CD8-positive, alpha-beta T cell (primary cell): ENCODE measurements at regions of chr12 and their contacts with region 1.

Region 1: GRCh38 chr12:12376646-12377448 is 20.0 kb downstream of the BORCS5 start:
- DNase-seq: peak in 3 of 9 experiments; percentile 37 to 87 (median 76)
- ATAC-seq: peak; percentile 39
- H3K4me3 ChIP-seq: no peak overlapping the region
- H3K4me3 Mint-ChIP-seq: no peak overlapping the region
- H3K27ac ChIP-seq: no peak overlapping the region
- H3K27ac Mint-ChIP-seq: peak overlapping the region; percentile 60
- H3K4me1 ChIP-seq: peaks cover 21% of the 10 kb centered on the region
- H3K4me1 Mint-ChIP-seq: peaks cover 37% of the 10 kb centered on the region
- H3K27me3 ChIP-seq: no peaks in the 10 kb centered on the region
- H3K27me3 Mint-ChIP-seq: no peaks in the 10 kb centered on the region
- CTCF ChIP-seq: peak; percentile 79

Region 2: GRCh38 chr12:12266873-12267741 is 109.7 kb before region 1 on chr12 and contains the start of gene LRP6:
- CTCF ChIA-PET with region 1: no interaction called
- POLR2A ChIA-PET with region 1: no interaction called
- intact Hi-C with region 1: no loop called
- DNase-seq: peak; percentile 33 to 83 (median 69)
- ATAC-seq: peak; percentile 91
- H3K4me3 ChIP-seq: peak within 1 kb of the TSS; percentile 66 to 85
- H3K4me3 Mint-ChIP-seq: peak within 1 kb of the TSS; percentile 87
- H3K27ac ChIP-seq: peak within 1 kb of the TSS in 1 of 2 experiments; percentile 35
- H3K27ac Mint-ChIP-seq: no peak within 1 kb of the TSS
- H3K4me1 ChIP-seq: peaks cover 14% of the 10 kb centered on the region
- H3K4me1 Mint-ChIP-seq: peaks cover 23% of the 10 kb centered on the region
- H3K27me3 ChIP-seq: peaks cover 0 to 20% of the 10 kb centered on the region in 2 experiments
- H3K27me3 Mint-ChIP-seq: peaks cover 28% of the 10 kb centered on the region
- CTCF ChIP-seq: no peak
- total RNA-seq, gene LRP6: 1.3 to 2.1 TPM

Region 3: DNA sequence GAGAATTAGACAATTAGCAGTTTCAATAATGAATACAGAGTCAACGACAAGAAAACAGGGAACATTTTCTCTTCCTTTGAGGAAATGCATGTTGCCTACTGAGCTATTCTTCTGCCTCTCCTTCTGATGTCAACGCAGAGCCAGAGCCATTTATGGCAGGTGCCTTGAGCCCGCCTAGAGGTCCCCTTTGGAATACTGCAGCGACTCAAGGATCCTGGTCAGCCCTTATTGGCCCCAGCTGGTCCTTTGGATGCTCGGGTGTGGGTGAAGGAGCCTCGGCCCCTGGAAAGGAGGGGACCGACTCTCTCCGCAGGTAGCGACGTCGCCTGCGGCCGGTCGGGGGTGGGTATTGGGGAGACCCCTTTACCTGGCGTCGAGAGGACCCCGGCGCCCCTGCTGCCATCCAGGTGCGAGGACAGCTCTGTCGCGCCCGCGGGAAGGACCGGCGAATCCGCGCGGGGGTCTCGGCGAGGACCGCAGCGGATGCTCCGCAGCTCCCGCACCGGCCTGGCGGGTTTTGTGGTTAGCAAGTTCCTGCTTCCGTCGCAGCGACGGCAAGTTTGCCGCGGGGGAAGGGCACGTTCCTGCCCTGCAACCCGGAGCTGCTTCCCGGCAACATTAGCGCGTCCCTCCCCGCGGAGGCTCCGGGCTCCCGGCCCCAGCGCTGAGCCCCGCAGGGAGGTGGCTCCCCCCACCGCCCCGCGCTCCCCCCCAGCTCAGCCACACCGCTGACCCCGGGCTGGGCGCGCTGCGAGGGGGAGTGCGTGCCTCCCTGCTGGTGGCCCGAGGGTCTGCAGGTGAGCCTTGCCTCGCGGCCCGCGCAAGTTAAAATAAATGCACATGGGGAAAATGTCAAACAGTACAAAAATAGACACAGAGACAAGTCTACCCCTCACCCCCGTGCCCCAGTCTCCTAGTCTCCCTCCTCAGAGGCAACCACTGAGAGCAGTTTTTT is 26.9 kb before region 1 on chr12 and contains the start of gene MANSC1:
- CTCF ChIA-PET with region 1: no interaction called
- POLR2A ChIA-PET with region 1: no interaction called
- intact Hi-C with region 1: no loop called
- DNase-seq: peak in 8 of 9 experiments; percentile 22 to 78 (median 52)
- ATAC-seq: peak; percentile 75
- H3K4me3 ChIP-seq: peak within 1 kb of the TSS; percentile 45 to 61
- H3K4me3 Mint-ChIP-seq: peak within 1 kb of the TSS; percentile 78
- H3K27ac ChIP-seq: peak within 1 kb of the TSS; percentile 24 to 45
- H3K27ac Mint-ChIP-seq: peak within 1 kb of the TSS; percentile 52
- H3K4me1 ChIP-seq: peaks cover 19% of the 10 kb centered on the region
- H3K4me1 Mint-ChIP-seq: peaks cover 22% of the 10 kb centered on the region
- H3K27me3 ChIP-seq: no peaks in the 10 kb centered on the region
- H3K27me3 Mint-ChIP-seq: no peaks in the 10 kb centered on the region
- CTCF ChIP-seq: peak; percentile 24
- total RNA-seq, gene MANSC1: not detected

Region 4: GRCh38 chr12:12474931-12475795 is 98.3 kb after region 1 on chr12:
- CTCF ChIA-PET with region 1: interaction called, 20 read pairs
- POLR2A ChIA-PET with region 1: no interaction called
- intact Hi-C with region 1: loop called in 1 of 2 experiments (anchors 2 kb)
- DNase-seq: peak in 6 of 9 experiments; percentile 22 to 81 (median 51)
- ATAC-seq: peak; percentile 86
- H3K4me3 ChIP-seq: peak overlapping the region in 1 of 2 experiments; percentile 27
- H3K4me3 Mint-ChIP-seq: peak overlapping the region; percentile 44
- H3K27ac ChIP-seq: peak overlapping the region; percentile 22 to 73
- H3K27ac Mint-ChIP-seq: peak overlapping the region; percentile 90
- H3K4me1 ChIP-seq: no peaks in the 10 kb centered on the region
- H3K4me1 Mint-ChIP-seq: peaks cover 52% of the 10 kb centered on the region
- H3K27me3 ChIP-seq: no peaks in the 10 kb centered on the region
- H3K27me3 Mint-ChIP-seq: no peaks in the 10 kb centered on the region
- CTCF ChIP-seq: no peak

Region 5: GRCh38 chr12:12562585-12563261 is 185.9 kb after region 1 on chr12 and contains the start of gene DUSP16:
- CTCF ChIA-PET with region 1: interaction called, 27 read pairs
- POLR2A ChIA-PET with region 1: interaction called, 11 read pairs
- intact Hi-C with region 1: loop called (anchors 1 kb)
- DNase-seq: peak; percentile 50 to 95 (median 75)
- ATAC-seq: peak; percentile 65
- H3K4me3 ChIP-seq: peak within 1 kb of the TSS; percentile 77 to 80
- H3K4me3 Mint-ChIP-seq: peak within 1 kb of the TSS; percentile 95
- H3K27ac ChIP-seq: peak within 1 kb of the TSS; percentile 92 to 96
- H3K27ac Mint-ChIP-seq: peak within 1 kb of the TSS; percentile 99
- H3K4me1 ChIP-seq: peaks cover 16% of the 10 kb centered on the region
- H3K4me1 Mint-ChIP-seq: peaks cover 43% of the 10 kb centered on the region
- H3K27me3 ChIP-seq: no peaks in the 10 kb centered on the region
- H3K27me3 Mint-ChIP-seq: no peaks in the 10 kb centered on the region
- CTCF ChIP-seq: no peak
- total RNA-seq, gene DUSP16: 27.9 to 34.1 TPM

Region 6: GRCh38 chr12:12654691-12655460 is 278.0 kb after region 1 on chr12:
- CTCF ChIA-PET with region 1: interaction called, 80 read pairs
- POLR2A ChIA-PET with region 1: no interaction called
- intact Hi-C with region 1: loop called (anchors 1 kb)
- DNase-seq: no peak
- ATAC-seq: no peak
- H3K4me3 ChIP-seq: no peak overlapping the region
- H3K4me3 Mint-ChIP-seq: no peak overlapping the region
- H3K27ac ChIP-seq: no peak overlapping the region
- H3K27ac Mint-ChIP-seq: no peak overlapping the region
- H3K4me1 ChIP-seq: no peaks in the 10 kb centered on the region
- H3K4me1 Mint-ChIP-seq: peaks cover 11% of the 10 kb centered on the region
- H3K27me3 ChIP-seq: no peaks in the 10 kb centered on the region
- H3K27me3 Mint-ChIP-seq: no peaks in the 10 kb centered on the region
- CTCF ChIP-seq: no peak

Region 7: GRCh38 chr12:12704593-12705230 is 327.9 kb after region 1 on chr12:
- CTCF ChIA-PET with region 1: interaction called, 4 read pairs
- POLR2A ChIA-PET with region 1: no interaction called
- intact Hi-C with region 1: loop called in 1 of 2 experiments (anchors 1 kb)
- DNase-seq: peak in 5 of 9 experiments; percentile 24 to 77 (median 35)
- ATAC-seq: peak; percentile 75
- H3K4me3 ChIP-seq: no peak overlapping the region
- H3K4me3 Mint-ChIP-seq: peak overlapping the region; percentile 50
- H3K27ac ChIP-seq: no peak overlapping the region
- H3K27ac Mint-ChIP-seq: peak overlapping the region; percentile 33
- H3K4me1 ChIP-seq: peaks cover 35% of the 10 kb centered on the region
- H3K4me1 Mint-ChIP-seq: peaks cover 21% of the 10 kb centered on the region
- H3K27me3 ChIP-seq: no peaks in the 10 kb centered on the region
- H3K27me3 Mint-ChIP-seq: no peaks in the 10 kb centered on the region
- CTCF ChIP-seq: peak; percentile 60

Region 8: GRCh38 chr12:12786716-12787601 is 410.1 kb after region 1 on chr12:
- CTCF ChIA-PET with region 1: interaction called, 6 read pairs
- POLR2A ChIA-PET with region 1: no interaction called
- intact Hi-C with region 1: loop called in 1 of 2 experiments (anchors 5 kb)
- DNase-seq: peak; percentile 47 to 90 (median 71)
- ATAC-seq: peak; percentile 90
- H3K4me3 ChIP-seq: peak overlapping the region; percentile 68 to 70
- H3K4me3 Mint-ChIP-seq: peak overlapping the region; percentile 77
- H3K27ac ChIP-seq: peak overlapping the region; percentile 72 to 73
- H3K27ac Mint-ChIP-seq: peak overlapping the region; percentile 87
- H3K4me1 ChIP-seq: peaks cover 16% of the 10 kb centered on the region
- H3K4me1 Mint-ChIP-seq: peaks cover 22% of the 10 kb centered on the region
- H3K27me3 ChIP-seq: no peaks in the 10 kb centered on the region
- H3K27me3 Mint-ChIP-seq: no peaks in the 10 kb centered on the region
- CTCF ChIP-seq: no peak